Ascending aorta (tissue), 2 donors: ENCODE measurements at regions of chr12 and their contacts with region 1.

Region 1: DNA sequence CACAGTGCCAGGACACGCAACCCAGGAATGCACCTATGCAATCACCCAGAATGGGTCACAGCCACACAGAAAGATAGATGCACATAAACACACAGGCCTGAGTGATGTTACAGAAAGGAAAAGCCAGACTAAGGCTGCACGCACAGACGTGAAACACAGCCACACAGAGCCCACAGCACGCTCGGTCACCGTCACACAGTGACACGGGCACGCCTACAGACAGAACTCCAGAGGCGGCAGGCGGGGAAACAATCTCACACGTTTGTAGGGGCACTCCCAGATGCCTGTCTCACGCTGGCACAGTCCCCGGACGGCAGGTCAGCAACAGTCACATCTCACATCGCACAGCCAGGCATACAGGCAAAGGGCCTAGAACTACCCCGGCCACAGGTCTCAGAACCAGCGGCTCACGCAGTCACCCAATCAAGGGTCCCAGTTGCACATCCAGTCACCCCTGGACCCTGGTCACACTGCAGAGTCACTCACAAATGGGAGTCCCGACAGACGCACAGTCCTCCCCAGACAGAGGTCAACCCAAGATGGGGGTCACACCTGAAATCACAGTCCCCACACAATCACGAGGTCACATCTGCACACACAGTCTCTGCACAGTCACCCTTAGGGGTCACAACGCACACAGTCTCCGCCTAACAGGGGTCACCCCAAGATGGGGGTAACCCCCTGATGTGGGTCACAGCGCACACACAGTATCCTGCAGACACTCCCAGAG is 790 bp downstream of the SSH1 start:
- DNase-seq: peak; percentile 59 to 88
- H3K4me3 ChIP-seq: peak overlapping the region; percentile 87 to 93
- H3K27ac ChIP-seq: peak overlapping the region; percentile 93 to 97
- H3K4me1 ChIP-seq: peaks cover 23 to 46% of the 10 kb centered on the region in 2 donors
- H3K27me3 ChIP-seq: no peaks in the 10 kb centered on the region
- CTCF ChIP-seq: no peak

Region 2: DNA sequence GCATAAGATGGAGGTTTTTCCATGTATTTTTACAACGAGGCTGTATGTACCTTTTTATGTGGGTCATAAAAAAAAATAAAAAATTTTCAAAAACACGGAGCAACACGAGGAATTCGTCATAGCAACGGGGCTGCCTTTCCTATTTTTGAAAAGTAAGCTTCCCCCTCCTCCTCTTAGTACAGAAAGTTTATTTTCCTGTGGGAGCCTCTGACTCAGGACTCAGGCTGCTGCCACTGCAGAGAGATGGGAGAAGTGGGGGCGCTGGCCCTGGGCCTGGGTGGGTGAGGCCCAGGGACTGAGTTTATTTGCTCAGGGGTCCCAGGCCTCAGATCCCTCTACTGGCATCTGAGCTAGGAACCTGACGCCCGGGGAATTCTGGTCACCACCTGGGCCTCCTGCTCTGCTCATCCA is 507.3 kb before region 1 on chr12:
- intact Hi-C with region 1: loop called (anchors 5 kb)
- DNase-seq: peak; percentile 16 to 83
- H3K4me3 ChIP-seq: peak overlapping the region in 1 of 2 donors; percentile 5
- H3K27ac ChIP-seq: peak overlapping the region; percentile 77 to 82
- H3K4me1 ChIP-seq: peaks cover 3 to 9% of the 10 kb centered on the region in 2 donors
- H3K27me3 ChIP-seq: no peaks in the 10 kb centered on the region
- CTCF ChIP-seq: no peak

Region 3: DNA sequence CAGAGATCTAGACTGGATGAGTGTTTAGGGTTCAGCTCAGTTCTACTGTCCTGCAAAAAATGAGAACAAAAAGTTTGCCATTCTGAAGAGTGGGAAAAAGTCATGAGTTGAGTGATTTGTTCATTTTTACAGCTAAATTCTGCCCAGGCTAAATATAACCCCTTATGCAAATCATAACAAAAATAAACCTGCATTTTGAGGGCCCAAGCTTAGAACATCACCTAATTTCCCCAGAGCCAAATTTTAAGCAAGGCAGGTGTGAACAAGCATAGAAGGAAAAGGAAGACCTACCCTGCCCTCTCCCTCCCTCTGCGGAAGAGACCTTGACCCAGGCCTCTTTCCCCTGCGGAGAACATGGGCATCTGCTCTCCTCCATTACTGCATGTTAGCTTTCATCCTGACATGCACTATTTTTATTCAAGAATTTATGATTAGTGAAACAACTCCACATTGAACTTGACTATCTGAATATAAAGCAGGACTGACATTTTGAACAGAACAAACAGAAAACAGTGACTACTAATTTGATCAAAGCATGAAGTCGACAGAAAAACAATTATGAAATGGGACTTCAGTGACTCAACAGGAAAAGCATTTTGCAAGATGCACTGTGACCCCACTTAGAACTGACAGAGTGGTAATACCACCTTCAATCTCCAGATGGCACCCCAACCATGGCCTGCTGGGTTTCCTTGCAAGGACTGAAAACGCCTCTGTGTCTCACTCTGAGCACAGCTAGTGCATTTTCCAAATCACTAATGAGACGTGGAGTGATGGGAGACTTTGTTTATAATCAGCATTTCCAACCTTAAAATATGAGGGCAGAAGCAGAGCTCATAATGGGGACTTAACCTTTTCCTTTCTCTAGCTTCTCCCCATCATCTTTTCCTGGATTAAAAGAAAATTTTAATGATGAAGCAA is 192.0 kb before region 1 on chr12:
- intact Hi-C with region 1: loop called (anchors 2 kb)
- DNase-seq: peak; percentile 41 to 96
- H3K4me3 ChIP-seq: peak overlapping the region in 1 of 2 donors; percentile 40
- H3K27ac ChIP-seq: peak overlapping the region; percentile 74 to 91
- H3K4me1 ChIP-seq: peaks cover 11 to 55% of the 10 kb centered on the region in 2 donors
- H3K27me3 ChIP-seq: no peaks in the 10 kb centered on the region
- CTCF ChIP-seq: peak; percentile 93 to 95 (median 95)

Region 4: DNA sequence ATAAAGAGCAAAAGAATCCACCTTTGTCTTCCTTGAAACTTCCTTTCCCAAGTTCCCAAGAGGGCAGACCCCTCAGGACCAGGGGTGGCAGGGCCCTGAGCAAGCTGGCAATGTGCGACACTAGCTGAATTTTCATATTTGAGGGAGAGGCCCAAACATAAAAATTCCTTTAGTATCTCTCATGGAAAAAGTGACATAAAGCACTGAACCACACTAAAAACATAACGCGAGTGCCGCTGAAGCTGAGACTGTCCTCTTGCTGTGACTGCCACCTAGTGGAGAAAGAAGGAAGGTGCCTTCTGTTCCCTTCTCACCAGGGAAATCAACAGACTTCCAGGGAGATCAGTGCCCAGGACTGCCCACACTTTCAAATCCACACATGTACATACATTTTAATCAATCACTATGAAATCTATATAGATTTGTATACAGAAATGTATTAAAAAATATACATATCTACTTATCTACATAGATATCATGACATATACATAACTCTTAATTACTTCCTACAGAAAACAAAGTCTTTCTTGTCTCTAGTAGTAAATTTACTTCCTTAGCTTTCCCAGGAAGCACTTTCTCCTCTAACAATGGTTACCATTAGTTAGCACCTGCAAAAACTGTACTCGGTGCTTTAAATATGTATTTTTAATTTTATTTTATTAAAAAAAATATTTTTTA is 53.0 kb before region 1 on chr12:
- intact Hi-C with region 1: loop called (anchors 1 kb)
- DNase-seq: peak in 1 of 2 donors; percentile 94
- H3K4me3 ChIP-seq: no peak overlapping the region
- H3K27ac ChIP-seq: peak overlapping the region; percentile 92 to 95
- H3K4me1 ChIP-seq: peaks cover 20 to 47% of the 10 kb centered on the region in 2 donors
- H3K27me3 ChIP-seq: no peaks in the 10 kb centered on the region
- CTCF ChIP-seq: peak; percentile 94 to 95 (median 94)

Region 5: DNA sequence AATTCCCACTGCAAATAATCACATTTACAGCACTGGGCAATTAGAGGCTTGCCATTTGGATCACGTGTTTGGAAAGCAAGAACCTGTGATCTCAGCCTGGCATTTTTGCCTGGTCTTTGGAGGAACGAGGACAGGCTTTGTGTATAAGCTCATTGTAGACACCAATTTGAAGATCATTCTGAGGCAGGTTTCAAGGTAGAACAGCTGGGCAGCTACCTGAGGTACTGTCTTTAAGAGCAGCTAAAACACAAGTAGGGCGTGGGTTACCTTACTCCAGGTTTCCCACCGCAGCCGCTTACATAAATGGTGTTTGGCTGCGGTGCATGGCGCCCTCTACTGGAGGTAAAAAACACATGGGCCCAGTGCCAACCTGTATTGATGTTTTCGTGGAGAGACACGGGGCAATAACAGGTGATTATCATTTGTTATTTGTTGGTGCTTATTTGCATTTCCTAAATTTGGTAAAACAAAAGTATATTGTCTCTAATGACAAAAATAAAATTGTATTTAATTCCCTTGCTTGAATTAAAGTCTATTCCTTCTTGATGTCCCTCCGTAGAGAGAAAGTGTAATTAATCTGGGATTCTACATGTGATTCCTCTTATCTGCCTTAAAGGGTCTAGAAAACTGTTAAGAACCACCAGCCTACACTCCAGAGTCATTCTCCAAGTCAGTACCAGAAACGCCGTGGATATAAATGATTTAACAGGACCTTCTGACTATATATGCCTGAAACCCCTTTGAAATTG is 94.6 kb after region 1 on chr12:
- intact Hi-C with region 1: loop called (anchors 1 kb)
- DNase-seq: peak in 1 of 2 donors; percentile 85
- H3K4me3 ChIP-seq: peak overlapping the region in 1 of 2 donors; percentile 34
- H3K27ac ChIP-seq: no peak overlapping the region
- H3K4me1 ChIP-seq: no peaks in the 10 kb centered on the region
- H3K27me3 ChIP-seq: no peaks in the 10 kb centered on the region
- CTCF ChIP-seq: peak; percentile 76 to 87 (median 87)

Region 6: DNA sequence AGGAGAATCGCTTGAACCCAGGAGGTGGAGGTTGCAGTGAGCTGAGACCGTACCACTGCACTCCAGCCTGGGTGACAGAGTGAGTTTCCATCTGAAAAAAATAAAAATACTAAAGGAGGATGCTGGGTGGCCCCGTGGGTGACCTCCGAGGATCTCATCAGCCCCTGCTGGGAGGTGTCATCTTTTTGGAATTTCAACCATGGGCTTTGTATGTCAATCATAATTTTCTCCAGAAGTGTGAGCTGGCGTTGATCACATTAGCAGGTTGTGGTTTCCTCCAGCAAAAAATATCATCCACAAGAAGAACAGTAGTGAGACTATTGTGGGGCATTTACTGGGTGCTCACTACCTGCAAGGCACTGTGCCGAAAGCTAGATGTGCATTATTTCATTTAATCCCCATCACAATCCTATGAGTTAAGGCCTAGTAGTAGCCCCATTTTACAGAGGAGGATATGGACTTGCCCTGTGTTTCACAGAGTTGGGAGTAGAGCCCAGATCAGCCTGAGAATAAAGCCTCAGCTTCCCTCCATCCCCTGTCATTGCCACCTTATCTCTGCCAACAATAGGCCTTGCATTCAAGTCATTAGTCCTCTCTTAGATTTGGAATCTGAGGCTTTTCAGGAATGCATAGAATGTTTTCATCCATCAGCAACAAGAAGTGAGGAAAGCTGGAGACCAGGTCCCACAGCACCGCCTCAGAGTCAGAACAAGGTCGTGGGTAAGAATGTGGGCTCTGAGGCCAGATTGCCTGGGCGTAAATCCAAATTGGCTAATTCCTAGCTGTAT is 124.4 kb after region 1 on chr12:
- intact Hi-C with region 1: no loop called
- DNase-seq: no peak
- H3K4me3 ChIP-seq: no peak overlapping the region
- H3K27ac ChIP-seq: no peak overlapping the region
- H3K4me1 ChIP-seq: no peaks in the 10 kb centered on the region
- H3K27me3 ChIP-seq: no peaks in the 10 kb centered on the region
- CTCF ChIP-seq: no peak